H1 (cell line): ENCODE measurements at regions of chr22 and their contacts with region 1.

Region 1: DNA sequence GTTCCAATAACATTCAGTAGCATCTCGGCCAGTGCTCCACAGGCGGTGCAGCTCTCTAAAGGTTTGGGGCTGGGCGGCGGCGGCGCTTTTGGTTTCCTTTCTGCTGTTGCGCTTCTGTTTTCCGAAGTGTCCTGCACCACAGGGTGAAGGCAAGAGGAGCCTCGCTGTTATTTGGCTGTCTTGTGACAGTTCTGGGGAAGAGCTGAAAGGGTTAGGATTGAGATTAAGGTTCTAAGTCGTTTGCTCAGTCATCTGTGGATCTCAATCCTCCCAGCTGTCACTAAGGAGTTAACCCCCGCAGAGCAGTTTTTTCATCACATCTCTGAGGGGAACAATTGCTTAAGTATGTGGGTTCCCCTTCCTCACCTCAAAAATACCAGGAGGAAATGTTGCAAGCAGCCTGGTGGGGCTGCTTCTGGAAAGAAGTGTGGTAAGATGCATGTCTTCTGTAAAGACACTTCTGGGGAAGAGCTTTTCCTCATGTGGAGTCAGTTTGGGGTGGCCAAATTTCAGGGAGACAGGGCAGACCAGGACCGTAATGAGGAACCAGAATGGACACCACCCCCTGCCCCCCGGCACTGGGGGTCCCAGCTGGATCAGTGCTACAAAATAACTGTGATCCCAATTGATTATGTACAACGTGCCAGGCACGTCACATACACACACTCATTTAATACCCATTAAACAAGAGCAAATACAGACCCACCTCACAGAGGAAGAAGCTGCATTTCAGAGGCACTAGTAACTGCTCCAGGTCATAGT is 14.2 kb downstream of the TMEM121B start:
- DNase-seq: no peak
- H3K4me3 ChIP-seq: no peak overlapping the region
- H3K27ac ChIP-seq: no peak overlapping the region
- H3K4me1 ChIP-seq: no peaks in the 10 kb centered on the region
- H3K27me3 ChIP-seq: no peaks in the 10 kb centered on the region
- CTCF ChIP-seq: no peak
- EP300 ChIP-seq: no peak
- POLR2A ChIP-seq: no peak
- RAD21 ChIP-seq: no peak

Region 2: GRCh38 chr22:17077255-17077654 is 29.7 kb before region 1 on chr22:
- CTCF ChIA-PET with region 1: interaction called, 10 read pairs
- POLR2A ChIA-PET with region 1: interaction called, 4 read pairs
- DNase-seq: no peak
- H3K4me3 ChIP-seq: no peak overlapping the region
- H3K27ac ChIP-seq: no peak overlapping the region
- H3K4me1 ChIP-seq: no peaks in the 10 kb centered on the region
- H3K27me3 ChIP-seq: no peaks in the 10 kb centered on the region
- CTCF ChIP-seq: no peak
- EP300 ChIP-seq: no peak
- POLR2A ChIP-seq: no peak
- RAD21 ChIP-seq: no peak

Region 3: DNA sequence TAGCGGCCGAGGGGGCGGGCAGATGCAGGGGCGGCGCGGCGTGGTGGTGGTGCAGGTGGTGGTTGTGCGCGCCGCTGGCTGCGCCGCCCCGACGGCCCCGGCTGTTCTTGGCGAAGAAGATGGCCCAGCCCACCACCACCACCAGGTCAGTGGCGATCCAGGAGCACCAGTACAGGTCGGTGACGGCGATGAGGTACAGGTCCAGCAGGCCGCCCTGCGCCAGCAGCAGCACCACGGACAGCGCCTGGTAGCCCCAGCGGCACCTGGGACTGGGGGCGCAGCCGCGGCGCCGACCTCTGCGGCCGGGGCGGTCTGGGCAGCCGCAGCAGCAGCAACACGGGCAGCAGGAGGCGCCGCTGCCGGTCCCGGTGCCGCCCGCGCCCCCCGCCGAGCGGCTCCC is 13.3 kb after region 1 on chr22:
- CTCF ChIA-PET with region 1: interaction called, 17 read pairs
- POLR2A ChIA-PET with region 1: interaction called, 5 read pairs
- DNase-seq: peak; percentile 46 to 93
- H3K4me3 ChIP-seq: peak overlapping the region; percentile 15 to 64 (median 24); a peak in 6 of 8 replicates
- H3K27ac ChIP-seq: no peak overlapping the region
- H3K4me1 ChIP-seq: peaks cover 4 to 17% (median 12%) of the 10 kb centered on the region in 4 experiments
- H3K27me3 ChIP-seq: peaks cover 0 to 4% (median 3%) of the 10 kb centered on the region in 4 experiments; a peak in 4 of 7 replicates
- CTCF ChIP-seq: peak in 2 of 3 experiments; percentile 11 to 21; a peak in 2 of 4 replicates
- EP300 ChIP-seq: no peak
- POLR2A ChIP-seq: no peak
- RAD21 ChIP-seq: no peak; a peak in 1 of 4 replicates